ENCODE measurements at regions of chr16 and their contacts with region 1.

Region 1: GRCh38 chr16:28924732-28925385 is at the start of gene RABEP2:
- DNase-seq: peak; percentile 99
- H3K4me3 Mint-ChIP-seq: peak within 1 kb of the TSS; percentile 92
- H3K27ac Mint-ChIP-seq: peak within 1 kb of the TSS; percentile 96
- H3K4me1 Mint-ChIP-seq: peaks cover 19% of the 10 kb centered on the region
- H3K27me3 Mint-ChIP-seq: no peaks in the 10 kb centered on the region
- total RNA-seq, gene RABEP2: 20.5 and 23.7 TPM in 2 replicates

Region 2: DNA sequence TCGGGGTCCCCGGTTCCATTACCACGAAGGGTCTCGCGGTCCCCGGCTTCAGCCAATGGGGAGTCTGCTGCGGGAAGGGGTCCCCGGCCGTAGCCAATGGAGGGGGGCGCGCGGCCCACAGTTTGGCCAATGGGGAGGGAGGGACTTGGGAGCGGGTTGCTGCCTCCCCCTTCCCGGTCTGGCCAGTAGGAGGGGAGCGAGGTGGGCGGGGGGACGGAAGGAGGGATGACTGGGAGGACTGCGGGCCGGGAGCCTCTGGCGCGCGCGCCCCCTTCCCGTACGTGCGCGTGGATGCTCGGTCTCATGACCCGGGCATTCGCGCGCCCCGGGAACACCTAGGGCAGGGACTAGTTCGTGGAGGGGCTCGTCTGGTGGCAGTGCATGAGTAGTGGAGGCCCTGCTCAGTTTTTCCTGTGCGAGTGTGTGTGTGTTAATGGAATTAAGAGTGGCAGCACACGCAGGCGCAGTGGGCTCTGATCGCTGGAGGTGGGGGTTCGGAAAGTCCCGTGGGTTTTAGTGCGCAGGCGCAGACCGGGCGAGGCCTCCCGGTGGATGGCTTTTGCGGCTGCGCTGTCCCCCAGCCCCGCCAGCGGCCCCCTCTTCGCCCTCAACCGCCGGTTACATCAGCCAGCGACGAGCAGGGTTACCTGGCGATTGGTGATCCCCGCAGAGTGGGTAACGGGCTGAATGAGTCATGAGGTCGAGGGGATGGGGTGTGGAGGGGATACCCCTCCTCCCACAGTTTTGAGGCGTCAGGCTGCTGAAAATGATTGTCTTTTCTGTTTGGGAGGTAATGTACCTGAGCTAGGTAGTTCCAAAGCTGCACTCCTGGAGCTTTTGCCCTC is 100.8 kb before region 1 on chr16:
- intact Hi-C with region 1: loop called (anchors 1 kb)
- DNase-seq: peak; percentile 98
- H3K4me3 Mint-ChIP-seq: peak overlapping the region; percentile 100
- H3K27ac Mint-ChIP-seq: peak overlapping the region; percentile 100
- H3K4me1 Mint-ChIP-seq: peaks cover 47% of the 10 kb centered on the region
- H3K27me3 Mint-ChIP-seq: peaks cover 2% of the 10 kb centered on the region

Region 3: GRCh38 chr16:28863929-28864793 is 60.7 kb before region 1 on chr16:
- intact Hi-C with region 1: loop called (anchors 2 kb)
- DNase-seq: peak; percentile 69
- H3K4me3 Mint-ChIP-seq: peak overlapping the region; percentile 100
- H3K27ac Mint-ChIP-seq: peak overlapping the region; percentile 99
- H3K4me1 Mint-ChIP-seq: peaks cover 22% of the 10 kb centered on the region
- H3K27me3 Mint-ChIP-seq: no peaks in the 10 kb centered on the region

Region 4: GRCh38 chr16:28935924-28936783 is 11.3 kb after region 1 on chr16:
- intact Hi-C with region 1: loop called (anchors 1 kb)
- DNase-seq: peak; percentile 97
- H3K4me3 Mint-ChIP-seq: peak overlapping the region; percentile 78
- H3K27ac Mint-ChIP-seq: peak overlapping the region; percentile 77
- H3K4me1 Mint-ChIP-seq: peaks cover 19% of the 10 kb centered on the region
- H3K27me3 Mint-ChIP-seq: peaks cover 2% of the 10 kb centered on the region

Region 5: GRCh38 chr16:28950648-28951409 is 26.0 kb after region 1 on chr16 and contains the start of gene NFATC2IP:
- intact Hi-C with region 1: loop called (anchors 1 kb)
- DNase-seq: peak; percentile 100
- H3K4me3 Mint-ChIP-seq: peak within 1 kb of the TSS; percentile 93
- H3K27ac Mint-ChIP-seq: peak within 1 kb of the TSS; percentile 94
- H3K4me1 Mint-ChIP-seq: peaks cover 27% of the 10 kb centered on the region
- H3K27me3 Mint-ChIP-seq: no peaks in the 10 kb centered on the region
- total RNA-seq, gene NFATC2IP: 108 and 112 TPM in 2 replicates